Heart right ventricle (tissue), 16 donors: ENCODE measurements at regions of chr7 and their contacts with region 1.

Region 1: GRCh38 chr7:94710256-94710655 is 54.3 kb upstream of the SGCE start:
- DNase-seq: no peak
- ATAC-seq: no peak
- H3K4me3 ChIP-seq: no peak overlapping the region
- H3K27ac ChIP-seq: no peak overlapping the region
- H3K4me1 ChIP-seq: no peaks in the 10 kb centered on the region
- H3K27me3 ChIP-seq: peaks cover 0 to 3% (median 0%) of the 10 kb centered on the region in 7 donors
- CTCF ChIP-seq: no peak

Region 2: DNA sequence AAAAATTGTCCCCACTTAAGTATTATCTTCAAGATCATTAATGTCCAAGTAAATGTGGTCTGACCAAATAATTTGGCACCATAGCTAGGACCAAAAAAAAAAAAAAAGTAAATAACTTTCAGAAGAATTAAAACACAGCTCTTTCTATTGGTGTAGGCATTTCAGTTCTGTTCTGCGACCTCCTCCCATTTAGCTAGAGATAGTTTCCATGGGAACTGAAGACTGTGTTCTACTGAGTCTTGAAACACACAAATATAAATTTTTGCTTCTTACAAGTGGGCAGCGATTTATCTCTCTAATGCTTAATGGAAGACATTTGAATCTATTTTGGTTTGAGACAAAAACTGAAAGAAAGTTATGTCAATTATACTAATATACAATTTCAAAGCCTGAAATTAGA is 68.8 kb after region 1 on chr7:
- intact Hi-C with region 1: loop called in 1 of 10 experiments (anchors 10 kb)
- DNase-seq: no peak
- ATAC-seq: peak in 1 of 8 donors; percentile 58
- H3K4me3 ChIP-seq: no peak overlapping the region
- H3K27ac ChIP-seq: no peak overlapping the region
- H3K4me1 ChIP-seq: no peaks in the 10 kb centered on the region
- H3K27me3 ChIP-seq: no peaks in the 10 kb centered on the region
- CTCF ChIP-seq: no peak

Region 3: DNA sequence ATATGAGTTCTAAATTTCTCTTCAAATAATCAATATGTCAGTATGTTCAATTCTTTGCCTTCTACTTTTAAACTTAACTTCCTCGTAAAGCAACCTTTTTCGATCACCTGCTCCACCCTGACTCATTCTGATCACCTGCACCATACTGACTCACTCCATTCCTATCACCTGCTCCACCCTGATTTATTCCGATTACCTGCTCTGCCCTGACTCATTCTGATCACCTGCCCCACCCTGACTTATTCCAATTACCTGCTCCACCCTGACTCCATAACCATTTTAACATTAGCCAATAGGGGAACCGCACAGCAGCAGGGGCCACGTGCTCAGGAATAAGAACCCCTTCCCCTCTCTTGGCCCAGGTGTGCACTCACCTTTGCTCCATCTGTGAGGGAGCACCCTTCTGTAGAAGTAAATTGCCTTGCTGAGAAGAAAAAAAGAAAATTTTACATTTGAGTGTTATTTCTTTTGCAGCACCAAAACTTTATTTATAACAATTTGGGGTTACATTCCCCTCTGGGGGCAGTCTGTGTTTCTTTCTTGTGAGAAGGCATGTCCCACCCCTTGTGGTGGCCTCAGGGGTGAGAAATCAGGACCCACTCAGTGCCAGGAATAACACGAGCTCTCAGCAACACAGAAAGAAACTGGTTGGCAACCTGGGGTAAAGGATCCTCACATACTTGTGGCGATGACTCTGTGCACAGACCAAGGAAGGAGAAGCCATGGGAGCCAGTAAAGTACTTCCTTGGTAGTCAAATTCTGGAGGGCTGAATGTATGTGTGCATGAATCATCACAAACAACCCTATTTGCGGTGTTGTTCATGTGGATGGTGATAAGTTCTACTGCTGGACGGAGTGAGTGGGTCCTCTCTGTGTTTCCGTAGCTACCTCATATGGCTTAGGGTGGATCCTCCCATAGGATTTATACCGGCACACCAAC is 167.7 kb after region 1 on chr7:
- intact Hi-C with region 1: no loop called
- DNase-seq: no peak
- ATAC-seq: no peak
- H3K4me3 ChIP-seq: no peak overlapping the region
- H3K27ac ChIP-seq: no peak overlapping the region
- H3K4me1 ChIP-seq: no peaks in the 10 kb centered on the region
- H3K27me3 ChIP-seq: no peaks in the 10 kb centered on the region
- CTCF ChIP-seq: no peak